OCI-LY7 (cell line): ENCODE measurements at regions of chr2 and their contacts with region 1.

Region 1: DNA sequence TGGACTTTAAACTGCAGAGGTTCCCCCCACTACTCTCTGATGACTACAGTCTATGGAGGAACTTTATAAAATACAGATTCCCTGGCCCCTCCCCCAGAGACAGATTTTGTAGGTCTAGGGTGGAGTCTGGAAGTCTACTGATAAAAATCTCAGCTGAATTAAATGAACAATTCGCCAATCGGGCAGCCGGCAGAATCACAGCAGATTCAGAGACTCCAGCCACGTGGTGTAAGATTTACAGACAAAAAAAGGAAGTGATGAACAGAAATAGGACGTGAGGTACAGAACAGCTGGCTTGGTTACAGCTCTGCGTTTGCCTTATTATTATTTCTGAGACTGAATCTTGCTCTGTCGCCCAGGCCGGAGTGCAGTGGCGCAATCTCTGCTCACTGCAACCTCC is 21.4 kb upstream of the MTA3 start:
- DNase-seq: peak; percentile 92
- H3K4me3 ChIP-seq: peak overlapping the region; percentile 65
- H3K27ac ChIP-seq: peak overlapping the region; percentile 98
- H3K4me1 ChIP-seq: peaks cover 61% of the 10 kb centered on the region
- CTCF ChIP-seq: no peak

Region 2: GRCh38 chr2:42494355-42495233 is 52.4 kb before region 1 on chr2:
- CTCF ChIA-PET with region 1: interaction called, 7 read pairs
- POLR2A ChIA-PET with region 1: interaction called, 4 read pairs
- intact Hi-C with region 1: loop called (anchors 2 kb)
- DNase-seq: peak; percentile 88
- H3K4me3 ChIP-seq: peak overlapping the region; percentile 72
- H3K27ac ChIP-seq: peak overlapping the region; percentile 26
- H3K4me1 ChIP-seq: peaks cover 10% of the 10 kb centered on the region
- CTCF ChIP-seq: peak; percentile 98

Region 3: DNA sequence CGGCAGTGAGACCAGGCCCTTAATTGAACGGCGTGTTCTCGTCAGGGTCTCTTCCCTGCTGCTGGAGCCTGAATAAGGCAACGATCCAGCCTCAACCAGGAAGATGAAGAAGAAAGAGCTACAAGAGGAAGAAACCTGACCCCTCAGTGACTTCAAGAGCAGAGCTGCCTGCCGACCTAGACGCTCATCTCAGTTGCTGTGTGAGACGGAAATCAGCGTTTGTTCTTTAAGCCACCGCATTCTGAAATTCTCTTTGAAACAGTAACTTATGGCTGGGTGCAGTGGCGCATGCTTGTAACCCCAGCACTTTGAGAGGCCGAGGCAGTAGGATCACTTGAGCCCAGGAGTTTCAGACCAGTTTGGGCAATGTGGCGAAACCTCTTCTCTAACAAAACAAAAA is 23.7 kb before region 1 on chr2:
- CTCF ChIA-PET with region 1: no interaction called
- POLR2A ChIA-PET with region 1: interaction called, 12 read pairs
- intact Hi-C with region 1: no loop called
- DNase-seq: no peak
- H3K4me3 ChIP-seq: no peak overlapping the region
- H3K27ac ChIP-seq: no peak overlapping the region
- H3K4me1 ChIP-seq: no peaks in the 10 kb centered on the region
- CTCF ChIP-seq: no peak

Region 4: DNA sequence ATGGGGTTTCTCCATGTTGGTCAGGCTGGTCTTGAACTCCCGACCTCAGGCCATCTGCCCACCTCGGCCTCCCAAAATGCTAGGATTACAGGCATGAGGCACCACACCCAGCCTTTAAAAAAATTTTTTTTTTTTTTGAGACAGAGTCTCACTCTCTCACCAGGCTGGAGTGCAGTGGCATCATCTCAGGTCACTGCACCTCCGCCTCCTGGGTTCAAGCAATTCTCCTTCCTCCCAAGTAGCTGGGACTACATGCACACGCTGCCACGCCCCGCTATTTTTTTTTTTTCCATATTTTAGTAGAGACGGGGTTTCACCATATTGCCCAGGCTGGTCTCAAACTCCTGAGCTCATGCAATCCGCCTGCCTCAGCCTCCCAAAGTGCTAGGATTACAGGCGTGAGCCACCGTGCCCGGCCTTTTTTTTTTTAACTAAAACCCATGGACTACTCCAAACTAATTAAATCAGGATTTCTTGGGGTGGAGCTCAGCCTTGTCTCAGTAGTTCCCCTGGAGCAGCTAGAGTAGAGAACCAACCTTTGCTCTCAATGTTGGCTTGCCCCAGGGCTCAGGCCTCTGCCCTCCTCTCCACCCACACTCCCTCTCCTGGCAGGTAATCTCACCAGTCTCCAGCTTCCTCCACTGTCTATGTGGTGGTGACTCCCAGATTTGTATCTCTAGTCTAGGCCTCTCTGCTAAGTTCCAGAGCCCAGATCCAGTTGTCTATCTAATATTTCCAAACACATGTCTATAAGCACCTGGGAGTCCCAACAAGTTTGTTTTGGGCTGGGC is 11.6 kb after region 1 on chr2:
- CTCF ChIA-PET with region 1: interaction called, 7 read pairs
- POLR2A ChIA-PET with region 1: interaction called, 81 read pairs
- intact Hi-C with region 1: loop called (anchors 1 kb)
- DNase-seq: peak; percentile 33
- H3K4me3 ChIP-seq: no peak overlapping the region
- H3K27ac ChIP-seq: peak overlapping the region; percentile 90
- H3K4me1 ChIP-seq: peaks cover 74% of the 10 kb centered on the region
- CTCF ChIP-seq: 0 out of 2 replicates have a peak, but pooled peaks have one; percentile 42

Region 5: GRCh38 chr2:42598656-42599055 is 51.6 kb after region 1 on chr2:
- CTCF ChIA-PET with region 1: no interaction called
- POLR2A ChIA-PET with region 1: interaction called, 10 read pairs
- intact Hi-C with region 1: loop called (anchors 2 kb)
- DNase-seq: peak; percentile 68
- H3K4me3 ChIP-seq: peak overlapping the region; percentile 48
- H3K27ac ChIP-seq: peak overlapping the region; percentile 82
- H3K4me1 ChIP-seq: peaks cover 43% of the 10 kb centered on the region
- CTCF ChIP-seq: peak; percentile 73